Breast epithelium (tissue), 4 donors: ENCODE measurements at regions of chr9 and their contacts with region 1.

Region 1: GRCh38 chr9:36942891-36943290 is 91.2 kb downstream of the PAX5 start:
- DNase-seq: no peak
- H3K4me3 ChIP-seq: no peak overlapping the region
- H3K27ac ChIP-seq: no peak overlapping the region
- H3K4me1 ChIP-seq: no peaks in the 10 kb centered on the region
- H3K27me3 ChIP-seq: peaks cover 0 to 10% of the 10 kb centered on the region in 2 donors
- CTCF ChIP-seq: no peak
- POLR2A ChIP-seq: no peak

Region 2: GRCh38 chr9:36966371-36967097 is 23.6 kb after region 1 on chr9:
- intact Hi-C with region 1: loop called (anchors 2 kb)
- DNase-seq: no peak
- H3K4me3 ChIP-seq: no peak overlapping the region
- H3K27ac ChIP-seq: no peak overlapping the region
- H3K4me1 ChIP-seq: no peaks in the 10 kb centered on the region
- H3K27me3 ChIP-seq: no peaks in the 10 kb centered on the region
- CTCF ChIP-seq: no peak
- POLR2A ChIP-seq: no peak